SK-N-SH (cell line): ENCODE measurements at regions of chr12 and their contacts with region 1.

Region 1: GRCh38 chr12:49358483-49359141 is 8.7 kb upstream of the SPATS2 start:
- DNase-seq: peak; percentile 74
- H3K4me3 ChIP-seq: peak overlapping the region in 1 of 2 experiments; percentile 43; a peak in 1 of 4 replicates
- H3K27ac ChIP-seq: peak overlapping the region in 1 of 2 experiments; percentile 44; a peak in 2 of 4 replicates
- H3K4me1 ChIP-seq: no peaks in the 10 kb centered on the region
- H3K27me3 ChIP-seq: no peaks in the 10 kb centered on the region
- CTCF ChIP-seq: peak; percentile 92
- EP300 ChIP-seq: no peak
- RAD21 ChIP-seq: peak; percentile 97

Region 2: GRCh38 chr12:49296034-49296835 is 62.4 kb before region 1 on chr12:
- CTCF ChIA-PET with region 1: interaction called, 256 read pairs
- POLR2A ChIA-PET with region 1: interaction called, 3 read pairs
- DNase-seq: peak; percentile 39
- H3K4me3 ChIP-seq: no peak overlapping the region; a peak in 1 of 4 replicates
- H3K27ac ChIP-seq: no peak overlapping the region
- H3K4me1 ChIP-seq: peaks cover 7 to 29% of the 10 kb centered on the region in 2 experiments; a peak in 3 of 4 replicates
- H3K27me3 ChIP-seq: no peaks in the 10 kb centered on the region
- CTCF ChIP-seq: no peak
- EP300 ChIP-seq: no peak
- RAD21 ChIP-seq: no peak

Region 3: DNA sequence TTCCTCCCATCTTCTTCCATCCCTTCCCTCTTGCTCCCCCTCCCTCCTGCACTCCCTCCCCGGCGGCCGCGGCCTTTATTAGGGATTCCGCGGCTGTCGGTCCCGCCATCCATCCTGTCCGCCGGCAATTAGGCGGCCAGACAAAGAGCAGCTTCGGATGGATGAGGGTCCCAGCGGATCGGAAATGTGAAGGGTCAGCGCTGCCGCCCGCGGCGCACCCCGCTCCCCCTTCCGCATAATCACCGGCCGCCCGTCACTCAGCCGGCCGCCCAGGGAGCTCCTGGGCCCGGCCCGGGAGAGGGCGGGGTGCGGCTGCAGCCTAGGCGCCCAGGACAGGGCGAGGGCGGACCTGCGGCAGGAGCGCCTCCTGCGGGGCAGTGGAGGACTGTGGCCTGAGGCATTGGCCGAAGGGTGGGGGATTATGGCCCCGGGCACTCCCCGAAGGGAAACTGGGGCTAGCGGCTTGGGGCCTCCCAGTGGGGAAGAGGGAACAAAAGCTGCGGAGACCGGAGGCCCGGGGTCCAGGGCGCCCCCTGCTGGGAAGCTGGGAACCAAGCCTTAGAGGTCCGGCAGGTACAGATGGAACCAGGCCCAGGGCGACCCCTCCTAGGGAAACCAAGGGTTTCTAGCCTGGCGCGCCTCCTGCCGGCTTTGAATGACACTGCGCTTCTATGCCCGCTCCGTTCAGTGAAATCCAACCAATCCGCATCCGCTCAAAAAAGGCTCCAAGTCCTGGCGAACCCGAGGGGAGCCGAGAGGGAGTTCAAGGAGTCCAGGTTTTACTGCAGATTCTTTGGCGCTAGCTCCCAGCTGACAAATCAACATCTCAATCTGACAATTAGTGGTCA is 16.3 kb before region 1 on chr12:
- CTCF ChIA-PET with region 1: interaction called, 133 read pairs
- POLR2A ChIA-PET with region 1: no interaction called
- DNase-seq: peak; percentile 96
- H3K4me3 ChIP-seq: peak overlapping the region; percentile 37 to 52
- H3K27ac ChIP-seq: no peak overlapping the region
- H3K4me1 ChIP-seq: peaks cover 14 to 39% of the 10 kb centered on the region in 2 experiments; a peak in 2 of 4 replicates
- H3K27me3 ChIP-seq: peaks cover 5% of the 10 kb centered on the region; the same call in 1 of the 2 replicates
- CTCF ChIP-seq: peak; percentile 95
- EP300 ChIP-seq: no peak
- RAD21 ChIP-seq: peak; percentile 71

Region 4: GRCh38 chr12:49388682-49389386 is 30.2 kb after region 1 on chr12:
- CTCF ChIA-PET with region 1: interaction called, 12 read pairs
- POLR2A ChIA-PET with region 1: no interaction called
- DNase-seq: no peak
- H3K4me3 ChIP-seq: no peak overlapping the region
- H3K27ac ChIP-seq: no peak overlapping the region
- H3K4me1 ChIP-seq: no peaks in the 10 kb centered on the region; a peak in 1 of 4 replicates
- H3K27me3 ChIP-seq: no peaks in the 10 kb centered on the region
- CTCF ChIP-seq: no peak
- EP300 ChIP-seq: no peak
- RAD21 ChIP-seq: no peak

Region 5: GRCh38 chr12:49487605-49488004 is 129.0 kb after region 1 on chr12:
- CTCF ChIA-PET with region 1: interaction called, 10 read pairs
- POLR2A ChIA-PET with region 1: no interaction called
- DNase-seq: no peak
- H3K4me3 ChIP-seq: no peak overlapping the region
- H3K27ac ChIP-seq: peak overlapping the region in 1 of 2 experiments; percentile 90; a peak in 2 of 4 replicates
- H3K4me1 ChIP-seq: peaks cover 0 to 52% of the 10 kb centered on the region in 2 experiments; a peak in 3 of 4 replicates
- H3K27me3 ChIP-seq: no peaks in the 10 kb centered on the region
- CTCF ChIP-seq: no peak
- EP300 ChIP-seq: no peak
- RAD21 ChIP-seq: no peak

Region 6: GRCh38 chr12:49553512-49554088 is 195.0 kb after region 1 on chr12:
- CTCF ChIA-PET with region 1: interaction called, 76 read pairs
- POLR2A ChIA-PET with region 1: no interaction called
- DNase-seq: peak; percentile 73
- H3K4me3 ChIP-seq: no peak overlapping the region
- H3K27ac ChIP-seq: no peak overlapping the region
- H3K4me1 ChIP-seq: no peaks in the 10 kb centered on the region; a peak in 1 of 4 replicates
- H3K27me3 ChIP-seq: no peaks in the 10 kb centered on the region
- CTCF ChIP-seq: peak; percentile 58
- EP300 ChIP-seq: no peak
- RAD21 ChIP-seq: peak; percentile 66